ENCODE measurements at regions of chr20 and their contacts with region 1.

Region 1: GRCh38 chr20:31723319-31724078 is 831 bp upstream of the BCL2L1 start:
- DNase-seq: peak; percentile 99
- H3K4me3 Mint-ChIP-seq: peak overlapping the region; percentile 98
- H3K27ac Mint-ChIP-seq: peak overlapping the region; percentile 96
- H3K4me1 Mint-ChIP-seq: peaks cover 5% of the 10 kb centered on the region
- H3K27me3 Mint-ChIP-seq: no peaks in the 10 kb centered on the region

Region 2: DNA sequence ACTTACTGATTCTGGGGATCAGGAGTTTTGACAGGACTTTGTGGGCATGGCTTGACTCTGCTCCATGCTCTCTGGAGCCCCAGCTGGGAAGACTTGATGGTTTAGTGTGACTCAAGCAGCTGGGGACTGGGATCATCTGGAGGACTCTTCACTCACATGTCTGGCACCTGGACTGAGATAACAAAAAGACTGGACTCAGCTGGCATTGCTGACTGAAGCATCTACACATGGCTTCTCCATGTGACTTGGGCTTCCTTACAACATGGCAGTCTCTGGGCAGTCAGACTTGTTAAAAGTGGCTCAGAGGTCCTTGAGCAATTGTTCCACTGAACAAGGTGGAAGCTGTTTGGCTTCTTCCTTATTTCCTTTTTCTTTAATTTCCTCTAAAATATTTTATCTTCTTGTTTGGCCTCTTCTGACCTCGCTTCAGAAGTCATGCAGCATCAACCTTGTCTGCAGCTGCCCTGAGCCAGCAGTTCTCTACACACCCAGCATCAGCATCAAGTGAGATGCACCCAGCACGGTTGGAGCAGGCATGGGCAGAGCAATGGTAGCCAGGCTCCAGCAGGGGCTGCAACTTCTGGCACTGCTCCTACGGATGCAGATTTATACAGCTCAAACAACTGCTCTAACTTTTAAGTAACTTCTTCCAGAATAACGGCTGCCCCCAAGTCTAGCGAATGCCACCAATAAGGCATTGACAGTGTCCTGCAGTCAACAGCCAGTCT is 214.8 kb before region 1 on chr20:
- CTCF ChIA-PET with region 1: no interaction called
- POLR2A ChIA-PET with region 1: no interaction called
- intact Hi-C with region 1: no loop called
- DNase-seq: no peak
- H3K4me3 Mint-ChIP-seq: no peak overlapping the region
- H3K27ac Mint-ChIP-seq: no peak overlapping the region
- H3K4me1 Mint-ChIP-seq: peaks cover 2% of the 10 kb centered on the region
- H3K27me3 Mint-ChIP-seq: peaks cover 4% of the 10 kb centered on the region

Region 3: GRCh38 chr20:31560094-31560899 is 163.2 kb before region 1 on chr20:
- CTCF ChIA-PET with region 1: interaction called, 15 read pairs
- POLR2A ChIA-PET with region 1: no interaction called
- intact Hi-C with region 1: no loop called
- DNase-seq: peak; percentile 87
- H3K4me3 Mint-ChIP-seq: no peak overlapping the region
- H3K27ac Mint-ChIP-seq: peak overlapping the region; percentile 66
- H3K4me1 Mint-ChIP-seq: peaks cover 15% of the 10 kb centered on the region
- H3K27me3 Mint-ChIP-seq: no peaks in the 10 kb centered on the region

Region 4: DNA sequence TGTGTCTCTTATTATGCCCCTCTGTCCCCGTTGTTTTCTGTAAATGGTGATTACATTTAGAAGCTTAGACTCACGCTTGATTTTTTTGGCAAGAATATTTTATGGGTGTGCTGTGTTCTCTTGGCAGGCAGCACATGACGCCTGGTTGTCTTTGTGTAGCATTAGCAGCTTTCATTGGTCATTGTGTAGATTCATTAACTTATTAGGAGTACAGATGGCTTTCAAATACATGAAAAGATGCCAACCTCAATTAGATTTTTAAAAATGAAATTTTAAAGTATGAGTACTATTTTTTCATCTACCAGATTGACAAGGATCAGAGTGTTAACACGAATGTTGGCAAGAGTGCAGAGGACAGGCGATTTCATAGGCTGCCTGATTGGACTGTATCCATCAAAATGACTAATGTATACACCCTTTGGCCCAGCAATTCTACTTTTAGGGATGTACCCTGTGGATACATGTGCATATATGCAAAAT is 70.5 kb before region 1 on chr20:
- CTCF ChIA-PET with region 1: interaction called, 417 read pairs
- POLR2A ChIA-PET with region 1: interaction called, 5 read pairs
- intact Hi-C with region 1: no loop called
- DNase-seq: no peak
- H3K4me3 Mint-ChIP-seq: no peak overlapping the region
- H3K27ac Mint-ChIP-seq: no peak overlapping the region
- H3K4me1 Mint-ChIP-seq: no peaks in the 10 kb centered on the region
- H3K27me3 Mint-ChIP-seq: peaks cover 4% of the 10 kb centered on the region

Region 5: GRCh38 chr20:31674895-31675827 is 48.3 kb before region 1 on chr20:
- CTCF ChIA-PET with region 1: interaction called, 75 read pairs
- POLR2A ChIA-PET with region 1: interaction called, 30 read pairs
- intact Hi-C with region 1: loop called (anchors 1 kb)
- DNase-seq: peak; percentile 86
- H3K4me3 Mint-ChIP-seq: peak overlapping the region; percentile 78
- H3K27ac Mint-ChIP-seq: peak overlapping the region; percentile 92
- H3K4me1 Mint-ChIP-seq: peaks cover 76% of the 10 kb centered on the region
- H3K27me3 Mint-ChIP-seq: no peaks in the 10 kb centered on the region

Region 6: DNA sequence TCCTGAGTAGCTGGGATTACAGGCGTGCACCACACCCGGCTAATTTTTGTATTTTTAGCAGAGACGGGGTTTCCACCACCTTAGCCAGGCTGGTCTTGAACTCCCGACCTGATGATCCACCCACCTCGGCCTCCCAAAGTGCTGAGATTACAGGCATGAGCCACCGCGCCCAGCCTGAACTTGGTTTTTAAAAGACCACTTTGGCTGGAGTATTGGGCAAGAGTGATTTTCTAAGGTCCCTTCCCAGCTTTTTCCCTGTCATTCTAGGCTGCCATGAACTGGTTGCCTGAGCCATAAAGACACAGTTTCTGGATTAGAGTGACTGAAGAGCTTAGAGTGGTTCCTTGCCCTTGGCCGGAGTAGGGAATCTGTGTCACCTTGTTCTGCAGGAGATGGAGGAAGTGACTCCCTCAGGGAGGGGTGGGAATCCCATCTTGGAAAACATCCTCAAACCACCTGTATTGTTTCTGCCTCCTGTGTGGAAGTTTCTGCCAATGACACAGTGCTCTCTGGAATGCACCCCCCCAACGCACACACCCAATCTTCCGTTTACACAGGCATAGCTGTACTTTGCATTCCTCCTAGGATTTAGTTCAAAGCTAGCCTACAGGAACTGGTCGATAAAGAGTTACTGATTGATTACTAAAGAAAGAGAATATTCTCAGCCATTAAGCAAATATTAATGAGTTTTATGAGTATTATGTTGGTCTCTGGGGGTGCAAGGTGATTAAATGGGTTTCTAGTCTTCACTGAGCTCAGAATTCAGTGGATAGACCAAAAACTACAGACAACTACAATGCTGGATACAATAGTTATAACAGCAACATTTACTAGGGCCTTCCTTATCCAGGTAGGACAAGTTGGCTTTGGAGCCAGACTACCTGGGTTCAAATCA is 19.0 kb before region 1 on chr20:
- CTCF ChIA-PET with region 1: interaction called, 33 read pairs
- POLR2A ChIA-PET with region 1: interaction called, 13 read pairs
- intact Hi-C with region 1: loop called (anchors 1 kb)
- DNase-seq: no peak
- H3K4me3 Mint-ChIP-seq: no peak overlapping the region
- H3K27ac Mint-ChIP-seq: no peak overlapping the region
- H3K4me1 Mint-ChIP-seq: peaks cover 67% of the 10 kb centered on the region
- H3K27me3 Mint-ChIP-seq: no peaks in the 10 kb centered on the region

Measured in activated CD4-positive, alpha-beta memory T cell treated with anti-CD3 and anti-CD28 coated beads for 36 hours (primary cell).